Breast epithelium (tissue), 4 donors: ENCODE measurements at regions of chr12 and their contacts with region 1.

Region 1: GRCh38 chr12:62640910-62641448 is 174.4 kb downstream of the MON2 start:
- DNase-seq: no peak
- H3K4me3 ChIP-seq: no peak overlapping the region
- H3K27ac ChIP-seq: no peak overlapping the region
- H3K4me1 ChIP-seq: no peaks in the 10 kb centered on the region
- H3K27me3 ChIP-seq: no peaks in the 10 kb centered on the region
- CTCF ChIP-seq: no peak
- POLR2A ChIP-seq: no peak

Region 2: GRCh38 chr12:62724947-62725447 is 84.0 kb after region 1 on chr12:
- intact Hi-C with region 1: loop called (anchors 10 kb)
- DNase-seq: peak in 1 of 2 donors; percentile 84
- H3K4me3 ChIP-seq: no peak overlapping the region
- H3K27ac ChIP-seq: peak overlapping the region; percentile 90
- H3K4me1 ChIP-seq: peaks cover 6% of the 10 kb centered on the region in 2 donors
- H3K27me3 ChIP-seq: no peaks in the 10 kb centered on the region
- CTCF ChIP-seq: no peak
- POLR2A ChIP-seq: no peak

Region 3: GRCh38 chr12:62995097-62995496 is 354.1 kb after region 1 on chr12:
- intact Hi-C with region 1: no loop called
- DNase-seq: no peak
- H3K4me3 ChIP-seq: no peak overlapping the region
- H3K27ac ChIP-seq: no peak overlapping the region
- H3K4me1 ChIP-seq: no peaks in the 10 kb centered on the region
- H3K27me3 ChIP-seq: no peaks in the 10 kb centered on the region
- CTCF ChIP-seq: no peak
- POLR2A ChIP-seq: no peak